Colonic mucosa (tissue), 4 donors: ENCODE measurements at regions of chr4 and their contacts with region 1.

Region 1: DNA sequence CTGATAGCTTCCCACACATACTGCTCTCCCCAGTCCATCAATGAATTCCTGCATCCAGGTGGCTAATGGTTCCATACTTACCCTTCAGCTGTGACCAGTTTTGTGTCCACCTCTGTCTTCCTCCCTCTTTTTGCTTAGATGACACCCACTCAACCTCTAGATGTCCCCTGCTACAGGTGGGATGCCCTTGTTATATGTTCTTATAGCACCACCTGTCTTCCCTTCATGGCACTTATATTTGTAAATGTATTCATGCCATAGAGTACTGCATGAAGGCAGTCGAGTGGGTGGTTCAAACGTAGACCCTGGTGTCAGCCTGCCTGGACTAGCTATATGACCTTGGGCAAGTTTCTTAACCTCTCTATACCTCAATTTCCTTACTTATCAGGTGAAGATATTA is 6.5 kb upstream of the USP46 start:
- DNase-seq: no peak
- H3K4me3 ChIP-seq: no peak overlapping the region
- H3K27ac ChIP-seq: no peak overlapping the region
- H3K4me1 ChIP-seq: no peaks in the 10 kb centered on the region
- H3K27me3 ChIP-seq: no peaks in the 10 kb centered on the region
- CTCF ChIP-seq: peak; percentile 16

Region 2: DNA sequence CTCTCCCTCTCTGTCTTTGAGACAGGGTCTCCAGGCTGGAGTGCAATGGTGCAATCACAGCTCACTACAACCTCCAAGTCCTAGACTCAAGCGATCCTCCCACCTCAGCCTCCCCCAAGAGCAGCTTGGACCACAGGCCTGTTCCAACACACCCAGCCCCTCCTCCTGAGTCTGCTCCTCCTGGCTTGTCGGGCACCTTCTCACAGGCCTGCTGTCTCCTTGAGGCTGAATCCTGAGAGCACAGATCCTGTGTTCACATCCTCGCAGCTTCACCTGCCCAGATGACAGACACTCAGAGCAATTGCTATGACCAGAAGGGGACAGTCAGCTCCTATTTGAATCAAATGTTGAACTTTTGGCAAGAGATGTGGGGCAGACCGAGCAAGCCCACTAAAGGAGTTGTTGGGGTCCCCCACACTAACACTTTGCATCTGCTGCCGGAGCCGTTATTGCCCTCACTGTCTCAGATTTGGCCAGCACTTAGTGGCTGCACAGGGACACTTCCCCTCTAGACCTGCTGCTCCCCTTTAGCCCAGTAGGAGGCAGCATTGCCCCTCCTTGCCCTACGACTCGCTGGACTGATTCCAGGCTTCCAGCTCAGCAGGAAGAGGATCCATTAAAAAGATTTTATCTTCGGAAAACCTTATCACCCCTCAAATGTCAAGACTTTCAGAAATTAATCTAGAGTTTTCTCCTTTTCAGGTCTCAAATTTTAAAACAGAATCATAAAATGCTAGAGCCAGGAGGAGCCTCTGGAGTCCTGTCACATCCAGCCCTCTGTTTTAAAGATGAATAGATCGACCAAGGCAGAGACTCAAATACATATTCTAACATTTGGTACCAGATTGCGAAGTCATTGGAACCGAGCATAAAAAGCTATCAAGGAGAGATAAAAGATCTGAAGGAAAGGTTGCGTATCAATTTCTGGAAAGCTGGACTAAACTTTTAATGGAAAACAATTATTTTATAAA is 120.2 kb before region 1 on chr4:
- intact Hi-C with region 1: loop called (anchors 5 kb)
- DNase-seq: peak; percentile 75
- H3K4me3 ChIP-seq: no peak overlapping the region
- H3K27ac ChIP-seq: no peak overlapping the region
- H3K4me1 ChIP-seq: no peaks in the 10 kb centered on the region
- H3K27me3 ChIP-seq: no peaks in the 10 kb centered on the region
- CTCF ChIP-seq: peak; percentile 88